CD14-positive monocyte (primary cell): ENCODE measurements at regions of chr14 and their contacts with region 1.

Region 1: DNA sequence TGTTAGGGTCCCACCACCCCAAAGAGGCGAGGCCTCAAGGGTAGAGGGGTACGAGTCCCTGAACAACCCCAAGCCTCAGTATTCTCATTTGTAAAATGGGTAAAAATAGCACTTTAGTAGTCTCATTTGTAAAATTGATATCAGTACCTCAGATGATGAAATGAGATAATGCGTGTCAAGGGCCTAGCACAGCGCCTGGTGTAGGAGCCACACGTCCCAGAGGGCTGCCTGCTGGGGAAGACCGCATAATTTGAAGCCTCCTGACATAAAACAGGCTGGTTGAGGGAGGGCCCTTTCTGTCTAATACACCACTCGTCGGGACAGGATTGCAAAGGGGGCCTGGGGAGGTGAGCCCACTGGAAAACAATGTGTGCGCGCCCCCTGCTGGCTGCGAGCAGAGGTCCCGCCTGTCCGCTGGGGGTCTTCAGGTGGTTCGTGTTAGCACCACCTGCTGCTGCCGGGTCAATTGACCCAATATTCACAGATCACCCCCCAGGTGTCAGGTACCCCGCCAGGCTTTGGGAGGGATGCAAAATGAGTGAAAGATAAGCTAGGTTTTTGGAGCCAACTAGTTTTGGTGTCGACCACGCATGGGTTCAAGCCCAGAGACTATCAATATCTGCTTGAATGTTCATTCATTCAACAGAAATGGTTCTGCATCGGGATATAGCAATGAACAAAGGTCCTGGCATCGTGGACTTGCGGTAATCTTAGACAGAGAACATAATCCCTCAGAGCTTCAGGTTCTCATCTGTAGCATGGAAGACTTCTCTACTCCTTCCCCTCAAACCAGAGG is 24.7 kb upstream of the IRF2BPL start:
- DNase-seq: peak; percentile 59 to 79 (median 70)
- H3K4me3 ChIP-seq: no peak overlapping the region
- H3K4me3 Mint-ChIP-seq: no peak overlapping the region
- H3K27ac ChIP-seq: no peak overlapping the region
- H3K27ac Mint-ChIP-seq: peak overlapping the region in 2 of 7 donors; percentile 26 to 50
- H3K4me1 ChIP-seq: peaks cover 9 to 12% of the 10 kb centered on the region in 2 donors
- H3K4me1 Mint-ChIP-seq: peaks cover 19% of the 10 kb centered on the region
- H3K27me3 ChIP-seq: no peaks in the 10 kb centered on the region
- H3K27me3 Mint-ChIP-seq: peaks cover 0 to 4% (median 0%) of the 10 kb centered on the region in 3 donors
- CTCF ChIP-seq: peak; percentile 97

Region 2: DNA sequence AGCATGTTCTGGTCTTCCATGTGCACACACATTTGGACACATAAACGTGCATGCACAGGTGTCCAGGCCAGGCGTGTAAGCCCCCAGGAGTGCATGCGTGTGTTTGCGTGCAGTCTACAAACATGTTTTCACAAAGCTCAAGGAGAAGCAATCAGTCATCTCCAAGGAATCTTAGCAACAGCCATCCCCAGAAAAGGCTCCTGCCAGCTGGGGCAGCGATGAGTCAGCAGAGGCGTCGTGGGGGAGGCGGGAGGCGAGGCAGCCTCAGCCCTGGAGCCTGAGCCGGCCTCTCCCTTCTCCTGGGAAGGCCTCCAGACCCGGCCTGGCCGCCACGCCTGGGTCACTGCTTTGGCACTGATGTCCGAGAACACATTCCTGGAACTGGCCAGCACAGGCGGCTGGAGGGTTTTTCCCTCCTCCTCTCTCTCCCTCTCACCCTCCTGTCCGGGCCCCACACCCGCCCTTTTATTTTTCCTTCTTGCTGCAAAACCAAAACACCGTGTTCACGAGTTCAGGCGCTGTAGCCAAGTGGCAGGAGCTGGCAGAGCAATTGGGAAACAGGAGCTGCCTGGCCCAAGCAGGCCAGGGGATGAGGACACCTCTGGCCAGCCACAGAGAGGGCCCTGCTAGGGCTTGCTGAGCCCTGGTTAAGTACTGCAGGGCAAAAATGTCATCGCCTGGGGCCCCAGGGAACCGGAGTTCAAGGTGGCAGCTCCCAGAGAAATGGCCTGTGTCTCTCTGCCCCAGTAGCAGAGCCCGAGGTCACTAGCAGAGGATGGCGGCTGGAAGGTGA is 134.3 kb before region 1 on chr14:
- intact Hi-C with region 1: loop called (anchors 5 kb)
- DNase-seq: peak; percentile 61 to 75 (median 75)
- H3K4me3 ChIP-seq: peak overlapping the region in 1 of 3 experiments; percentile 19
- H3K4me3 Mint-ChIP-seq: peak overlapping the region in 1 of 2 donors; percentile 82
- H3K27ac ChIP-seq: peak overlapping the region; percentile 50 to 86
- H3K27ac Mint-ChIP-seq: peak overlapping the region; percentile 89 to 96 (median 94)
- H3K4me1 ChIP-seq: peaks cover 45 to 54% of the 10 kb centered on the region in 2 donors
- H3K4me1 Mint-ChIP-seq: peaks cover 52% of the 10 kb centered on the region
- H3K27me3 ChIP-seq: no peaks in the 10 kb centered on the region
- H3K27me3 Mint-ChIP-seq: peaks cover 18 to 32% (median 22%) of the 10 kb centered on the region in 3 donors
- CTCF ChIP-seq: no peak

Region 3: GRCh38 chr14:76968621-76969063 is 84.6 kb before region 1 on chr14:
- intact Hi-C with region 1: no loop called
- DNase-seq: no peak
- H3K4me3 ChIP-seq: no peak overlapping the region
- H3K4me3 Mint-ChIP-seq: no peak overlapping the region
- H3K27ac ChIP-seq: no peak overlapping the region
- H3K27ac Mint-ChIP-seq: peak overlapping the region in 1 of 7 donors; percentile 27
- H3K4me1 ChIP-seq: no peaks in the 10 kb centered on the region
- H3K4me1 Mint-ChIP-seq: no peaks in the 10 kb centered on the region
- H3K27me3 ChIP-seq: no peaks in the 10 kb centered on the region
- H3K27me3 Mint-ChIP-seq: peaks cover 0 to 11% (median 3%) of the 10 kb centered on the region in 3 donors
- CTCF ChIP-seq: no peak